ENCODE measurements at regions of chr5 and their contacts with region 1.

Region 1: DNA sequence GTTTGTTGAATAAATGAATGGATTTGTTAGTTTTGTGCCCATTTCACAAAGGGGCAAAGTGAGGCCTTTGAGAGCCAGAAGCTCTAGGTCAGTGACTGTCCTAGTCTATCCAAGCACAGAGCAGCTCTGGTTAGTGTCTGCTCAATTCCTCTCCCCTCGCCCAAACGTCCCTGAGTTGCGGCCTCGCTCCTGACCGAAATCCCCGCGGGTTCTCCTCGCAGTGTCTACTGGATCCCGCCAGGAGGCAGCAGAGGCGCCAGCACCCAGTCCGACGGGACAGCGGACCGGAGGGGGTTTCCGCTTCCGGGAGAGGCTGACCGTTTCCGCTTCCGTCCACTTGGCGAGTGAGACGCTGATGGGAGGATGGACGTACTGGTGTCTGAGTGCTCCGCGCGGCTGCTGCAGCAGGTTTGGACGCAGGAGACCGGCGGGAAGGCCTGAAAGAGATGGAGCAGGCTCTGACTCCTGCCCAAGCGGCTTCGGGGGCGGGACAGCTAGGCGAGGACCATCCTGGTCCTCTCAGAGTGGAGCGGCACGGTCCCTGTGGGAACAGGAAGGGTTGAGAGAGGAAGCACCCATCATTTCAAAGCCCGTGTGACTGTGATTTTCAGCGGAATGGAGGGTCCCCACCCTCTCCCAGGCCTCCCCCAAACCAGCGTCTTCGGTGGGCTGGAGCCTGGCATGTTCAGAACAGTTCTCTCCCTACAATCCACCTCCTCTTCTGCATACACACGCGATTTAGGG is at the start of gene RARS1:
- DNase-seq: peak; percentile 65
- H3K4me3 ChIP-seq: peak within 1 kb of the TSS; percentile 64
- CTCF ChIP-seq: peak; percentile 99

Region 2: DNA sequence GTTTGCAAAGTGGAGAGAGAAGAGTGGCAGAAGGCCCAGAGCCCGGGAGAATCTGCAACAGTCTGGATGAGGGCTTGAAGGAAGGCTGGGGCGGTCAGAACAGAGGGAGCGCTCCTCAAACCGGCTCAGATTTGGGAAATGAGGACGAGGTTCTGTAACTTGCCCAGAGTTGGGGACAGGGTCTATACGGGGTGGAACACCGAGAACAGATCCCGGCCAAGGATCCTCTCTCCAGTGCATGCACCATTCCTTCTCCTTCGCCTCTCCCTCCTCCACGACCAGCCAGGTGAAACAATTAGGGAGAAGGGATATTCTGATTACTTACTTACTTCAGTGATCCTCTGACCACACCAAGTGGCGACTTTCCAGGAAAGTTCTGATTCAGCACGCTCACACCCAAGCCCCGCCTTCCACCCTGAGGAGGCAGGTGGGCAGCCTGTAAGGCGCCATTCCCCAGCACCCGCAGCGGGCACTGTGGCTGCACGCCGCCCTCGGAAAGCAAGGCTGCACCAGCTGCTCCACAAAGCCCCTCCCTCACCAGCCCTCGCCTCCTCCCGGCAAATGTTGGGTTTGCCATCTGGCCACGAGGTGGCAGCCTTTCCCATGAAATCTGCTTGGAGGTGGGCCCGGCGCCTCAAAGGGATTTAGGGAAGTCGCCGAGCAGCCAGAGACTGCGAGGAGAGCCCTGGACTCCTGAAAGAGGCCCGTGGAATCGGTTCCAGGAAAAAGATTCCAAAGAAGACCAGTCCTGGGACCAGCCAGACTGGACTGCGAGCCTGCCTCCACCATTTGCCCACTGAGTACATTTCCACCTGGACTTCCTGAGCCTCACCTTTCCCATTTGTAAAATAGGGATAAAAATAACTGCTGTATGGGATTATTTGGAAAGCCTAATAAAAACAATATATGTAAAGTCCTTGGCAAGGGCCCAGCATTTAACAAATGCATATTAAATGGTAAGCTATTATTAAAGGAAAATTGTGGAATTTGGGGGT is 217.1 kb before region 1 on chr5:
- CTCF ChIA-PET with region 1: interaction called, 97 read pairs
- POLR2A ChIA-PET with region 1: interaction called, 3 read pairs
- DNase-seq: no peak
- H3K4me3 ChIP-seq: peak overlapping the region; percentile 54
- CTCF ChIP-seq: peak; percentile 92

Region 3: DNA sequence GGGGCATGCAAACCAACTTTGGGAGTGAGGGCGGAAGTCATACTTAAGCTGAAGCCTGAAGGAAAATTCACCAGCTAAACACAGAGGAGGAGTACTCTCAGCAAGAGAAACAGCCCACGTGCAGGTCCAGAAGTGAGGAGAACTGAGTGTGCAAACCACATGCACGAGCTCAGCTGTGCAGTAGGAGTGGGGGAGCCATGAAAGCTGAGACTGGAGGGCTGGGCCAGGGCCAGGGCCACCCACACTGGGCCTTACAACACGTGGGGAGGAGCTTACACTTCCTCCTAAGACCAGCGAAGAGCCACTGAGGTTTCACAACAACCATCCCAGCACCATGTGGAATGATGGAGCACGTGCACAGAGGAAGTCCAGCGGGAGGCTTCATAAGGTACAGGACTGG is 204.2 kb before region 1 on chr5:
- CTCF ChIA-PET with region 1: interaction called, 10 read pairs
- POLR2A ChIA-PET with region 1: no interaction called
- DNase-seq: peak; percentile 38
- H3K4me3 ChIP-seq: no peak overlapping the region
- CTCF ChIP-seq: no peak

Region 4: GRCh38 chr5:168463081-168463480 is 23.2 kb before region 1 on chr5:
- CTCF ChIA-PET with region 1: interaction called, 10 read pairs
- POLR2A ChIA-PET with region 1: no interaction called
- DNase-seq: no peak
- H3K4me3 ChIP-seq: no peak overlapping the region
- CTCF ChIP-seq: no peak

Region 5: GRCh38 chr5:168472329-168472728 is 14.0 kb before region 1 on chr5:
- CTCF ChIA-PET with region 1: interaction called, 48 read pairs
- POLR2A ChIA-PET with region 1: interaction called, 4 read pairs
- DNase-seq: peak; percentile 91
- H3K4me3 ChIP-seq: no peak overlapping the region
- CTCF ChIP-seq: peak; percentile 31

Region 6: GRCh38 chr5:168502563-168503237 is 16.4 kb after region 1 on chr5:
- CTCF ChIA-PET with region 1: interaction called, 13 read pairs
- POLR2A ChIA-PET with region 1: no interaction called
- DNase-seq: no peak
- H3K4me3 ChIP-seq: no peak overlapping the region
- CTCF ChIP-seq: no peak

Region 7: DNA sequence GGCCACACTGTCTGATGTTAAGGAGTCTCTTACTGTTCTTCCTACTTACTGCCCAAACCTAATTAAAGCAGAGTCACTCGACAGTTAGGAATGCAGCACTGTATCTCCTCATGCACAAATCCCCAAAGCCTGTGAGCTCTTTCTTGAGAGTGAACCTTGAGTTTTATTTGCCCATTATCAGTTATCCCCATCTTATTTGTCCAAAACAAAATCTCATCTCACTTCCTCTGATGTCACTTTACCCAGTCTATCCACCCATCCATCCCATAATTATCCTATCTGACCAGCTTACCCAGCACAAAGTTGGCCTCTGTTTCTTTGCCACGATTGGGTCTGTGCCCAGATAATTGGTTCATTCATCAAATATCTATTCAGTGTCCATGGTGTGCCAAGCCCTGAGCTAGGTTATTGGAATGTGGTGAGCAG is 563.9 kb after region 1 on chr5:
- CTCF ChIA-PET with region 1: no interaction called
- POLR2A ChIA-PET with region 1: no interaction called
- DNase-seq: no peak
- H3K4me3 ChIP-seq: no peak overlapping the region
- CTCF ChIP-seq: no peak